Transverse colon (tissue), 4 donors: ENCODE measurements at regions of chr17 and their contacts with region 1.

Region 1: GRCh38 chr17:10429421-10430045 is 7.8 kb upstream of the MYH8 start:
- DNase-seq: no peak
- H3K4me3 ChIP-seq: no peak overlapping the region
- H3K27ac ChIP-seq: no peak overlapping the region
- H3K4me1 ChIP-seq: no peaks in the 10 kb centered on the region
- H3K27me3 ChIP-seq: no peaks in the 10 kb centered on the region
- CTCF ChIP-seq: no peak
- EP300 ChIP-seq: no peak
- POLR2A ChIP-seq: no peak

Region 2: DNA sequence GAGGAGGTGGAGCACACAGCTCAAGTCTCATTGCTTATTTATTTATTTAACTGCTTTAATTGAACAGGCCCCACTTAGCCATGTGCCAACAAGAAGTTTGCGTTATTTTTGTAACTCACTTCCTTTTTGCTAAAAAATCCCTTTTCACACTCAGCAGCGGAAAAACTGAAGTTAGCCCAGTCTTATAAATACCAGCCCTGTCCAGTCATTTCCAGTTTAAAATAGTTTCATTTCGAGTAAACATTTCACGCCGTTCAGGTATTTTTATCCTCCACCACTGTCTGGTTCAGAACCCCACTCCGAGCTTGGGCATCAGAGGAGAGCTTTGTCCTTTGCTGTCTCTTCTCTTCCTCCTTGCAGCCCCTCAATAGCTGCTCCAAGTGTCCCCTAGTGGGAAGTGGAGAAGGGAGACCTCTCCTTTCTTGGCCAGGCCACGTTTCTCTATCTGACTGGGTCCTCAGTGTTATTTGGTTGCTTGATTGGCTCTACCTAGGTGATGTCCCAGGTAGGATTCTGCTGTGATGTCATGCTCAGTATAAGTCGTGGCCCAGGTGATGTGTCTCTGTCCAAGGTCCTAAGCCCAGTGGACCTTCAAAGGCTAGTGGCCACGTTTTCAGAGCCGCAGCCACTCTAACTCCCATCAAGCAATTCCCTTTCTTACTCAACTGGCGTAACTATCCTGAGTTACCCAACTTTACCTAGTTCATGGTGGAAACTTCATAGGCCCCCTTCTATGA is 178.2 kb before region 1 on chr17:
- in situ Hi-C with region 1: no loop called
- intact Hi-C with region 1: no loop called
- DNase-seq: no peak
- H3K4me3 ChIP-seq: no peak overlapping the region
- H3K27ac ChIP-seq: no peak overlapping the region
- H3K4me1 ChIP-seq: no peaks in the 10 kb centered on the region
- H3K27me3 ChIP-seq: no peaks in the 10 kb centered on the region
- CTCF ChIP-seq: no peak
- EP300 ChIP-seq: no peak
- POLR2A ChIP-seq: no peak

Region 3: DNA sequence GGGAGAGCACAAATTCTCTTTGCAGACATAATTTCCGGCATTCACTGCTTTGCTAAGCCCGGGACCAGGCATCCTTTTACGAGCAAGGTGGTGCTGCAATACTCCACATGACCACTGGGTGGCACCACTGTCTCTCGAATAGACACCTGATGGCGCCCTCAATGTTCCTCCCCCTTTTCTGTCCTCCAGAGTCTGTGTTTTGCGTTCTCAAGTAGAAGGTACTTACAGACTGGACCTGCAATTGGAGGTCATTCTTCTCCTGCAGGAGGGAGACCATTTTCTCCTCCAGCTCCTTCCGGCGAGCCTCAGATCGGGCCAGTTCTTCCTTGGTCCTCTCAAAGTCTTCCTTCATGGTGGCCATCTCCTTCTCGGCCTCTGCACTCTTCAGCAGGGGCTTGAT is 101.9 kb before region 1 on chr17:
- in situ Hi-C with region 1: loop called in 1 of 4 experiments (anchors 25 kb)
- intact Hi-C with region 1: no loop called
- DNase-seq: peak; percentile 84
- H3K4me3 ChIP-seq: no peak overlapping the region
- H3K27ac ChIP-seq: no peak overlapping the region
- H3K4me1 ChIP-seq: no peaks in the 10 kb centered on the region
- H3K27me3 ChIP-seq: no peaks in the 10 kb centered on the region
- CTCF ChIP-seq: peak; percentile 87 to 96 (median 93)
- EP300 ChIP-seq: no peak
- POLR2A ChIP-seq: no peak